Transverse colon (tissue), 4 donors: ENCODE measurements at regions of chr5 and their contacts with region 1.

Region 1: GRCh38 chr5:32092938-32093812 is 80.9 kb downstream of the GOLPH3 start:
- DNase-seq: peak; percentile 54
- H3K4me3 ChIP-seq: no peak overlapping the region
- H3K27ac ChIP-seq: no peak overlapping the region
- H3K4me1 ChIP-seq: peaks cover 0 to under 1% (median 0%) of the 10 kb centered on the region in 4 donors
- H3K27me3 ChIP-seq: no peaks in the 10 kb centered on the region
- CTCF ChIP-seq: peak; percentile 59 to 72 (median 65)
- EP300 ChIP-seq: no peak
- POLR2A ChIP-seq: no peak

Region 2: GRCh38 chr5:31573494-31574142 is 519.6 kb before region 1 on chr5:
- in situ Hi-C with region 1: loop called in 3 of 4 experiments (anchors 25 kb)
- intact Hi-C with region 1: loop called (anchors 10 kb)
- DNase-seq: no peak
- H3K4me3 ChIP-seq: no peak overlapping the region
- H3K27ac ChIP-seq: no peak overlapping the region
- H3K4me1 ChIP-seq: no peaks in the 10 kb centered on the region
- H3K27me3 ChIP-seq: no peaks in the 10 kb centered on the region
- CTCF ChIP-seq: no peak
- EP300 ChIP-seq: no peak
- POLR2A ChIP-seq: no peak

Region 3: DNA sequence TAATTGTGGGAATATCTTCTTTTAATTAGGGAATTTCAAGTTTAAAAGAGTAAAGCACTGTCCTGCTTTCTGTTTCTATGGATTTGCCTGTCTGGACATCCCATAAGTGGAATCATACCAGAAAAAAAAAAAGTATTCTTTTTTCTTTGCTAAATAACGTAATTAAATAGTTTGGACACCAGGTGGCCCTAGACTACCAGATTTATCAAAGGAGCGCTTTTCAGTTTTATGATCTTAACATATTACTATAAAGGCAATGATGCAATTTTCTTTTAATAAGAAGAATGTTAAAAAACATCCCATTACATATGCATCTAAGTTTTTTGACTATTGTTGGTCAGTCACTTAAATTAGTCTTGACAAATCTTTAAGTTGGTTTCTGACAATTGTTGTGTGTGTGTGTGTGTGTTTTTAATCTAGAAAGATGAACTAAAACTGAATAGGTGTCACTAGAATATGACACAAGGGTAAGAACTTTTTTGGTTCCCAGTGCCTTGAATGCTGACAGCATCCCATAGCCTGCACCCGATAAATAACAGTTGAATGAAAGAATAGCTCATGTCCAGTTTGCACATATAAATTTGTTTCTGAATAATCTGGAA is 511.6 kb before region 1 on chr5:
- in situ Hi-C with region 1: loop called in 3 of 4 experiments (anchors 25 kb)
- intact Hi-C with region 1: loop called (anchors 10 kb)
- DNase-seq: no peak
- H3K4me3 ChIP-seq: no peak overlapping the region
- H3K27ac ChIP-seq: no peak overlapping the region
- H3K4me1 ChIP-seq: no peaks in the 10 kb centered on the region
- H3K27me3 ChIP-seq: peaks cover 9% of the 10 kb centered on the region
- CTCF ChIP-seq: peak; percentile 34 to 52 (median 42)
- EP300 ChIP-seq: no peak
- POLR2A ChIP-seq: no peak

Region 4: GRCh38 chr5:31825518-31826068 is 267.6 kb before region 1 on chr5:
- in situ Hi-C with region 1: loop called in 1 of 4 experiments (anchors 10 kb)
- intact Hi-C with region 1: loop called (anchors 5 kb)
- DNase-seq: peak; percentile 21
- H3K4me3 ChIP-seq: no peak overlapping the region
- H3K27ac ChIP-seq: no peak overlapping the region
- H3K4me1 ChIP-seq: no peaks in the 10 kb centered on the region
- H3K27me3 ChIP-seq: no peaks in the 10 kb centered on the region
- CTCF ChIP-seq: peak; percentile 41 to 52 (median 46)
- EP300 ChIP-seq: no peak
- POLR2A ChIP-seq: no peak

Region 5: GRCh38 chr5:31833005-31833404 is 260.2 kb before region 1 on chr5:
- in situ Hi-C with region 1: loop called in 1 of 4 experiments (anchors 10 kb)
- intact Hi-C with region 1: loop called (anchors 5 kb)
- DNase-seq: no peak
- H3K4me3 ChIP-seq: no peak overlapping the region
- H3K27ac ChIP-seq: no peak overlapping the region
- H3K4me1 ChIP-seq: no peaks in the 10 kb centered on the region
- H3K27me3 ChIP-seq: no peaks in the 10 kb centered on the region
- CTCF ChIP-seq: no peak
- EP300 ChIP-seq: no peak
- POLR2A ChIP-seq: no peak

Region 6: DNA sequence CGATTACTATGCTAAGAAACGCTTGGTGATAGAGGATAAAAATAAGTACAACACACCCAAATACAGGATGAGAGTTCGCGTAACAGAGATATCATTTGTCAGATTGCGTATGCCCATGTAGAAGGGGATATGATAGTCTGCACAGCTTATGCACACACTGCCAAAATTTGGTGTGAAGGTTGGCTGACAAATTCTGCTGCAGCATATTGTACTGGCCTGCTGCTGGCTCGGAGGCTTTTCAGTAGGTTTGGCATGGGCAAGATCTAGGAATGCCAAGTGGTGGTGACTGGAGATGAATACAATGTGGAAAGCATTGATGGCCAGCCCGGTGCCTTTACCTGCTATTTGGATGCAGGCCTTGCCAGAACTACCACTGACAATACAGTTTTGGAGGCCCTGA is 245.8 kb before region 1 on chr5:
- in situ Hi-C with region 1: no loop called
- intact Hi-C with region 1: no loop called
- DNase-seq: no peak
- H3K4me3 ChIP-seq: no peak overlapping the region
- H3K27ac ChIP-seq: no peak overlapping the region
- H3K4me1 ChIP-seq: no peaks in the 10 kb centered on the region
- H3K27me3 ChIP-seq: no peaks in the 10 kb centered on the region
- CTCF ChIP-seq: no peak
- EP300 ChIP-seq: no peak
- POLR2A ChIP-seq: no peak

Region 7: GRCh38 chr5:31987985-31988710 is 105.0 kb before region 1 on chr5:
- in situ Hi-C with region 1: no loop called
- intact Hi-C with region 1: no loop called
- DNase-seq: no peak
- H3K4me3 ChIP-seq: no peak overlapping the region
- H3K27ac ChIP-seq: no peak overlapping the region
- H3K4me1 ChIP-seq: peaks cover 0 to 6% (median 0%) of the 10 kb centered on the region in 4 donors
- H3K27me3 ChIP-seq: no peaks in the 10 kb centered on the region
- CTCF ChIP-seq: no peak
- EP300 ChIP-seq: no peak
- POLR2A ChIP-seq: no peak

Region 8: GRCh38 chr5:32406650-32407049 is 313.5 kb after region 1 on chr5:
- in situ Hi-C with region 1: no loop called
- intact Hi-C with region 1: no loop called
- DNase-seq: no peak
- H3K4me3 ChIP-seq: no peak overlapping the region
- H3K27ac ChIP-seq: no peak overlapping the region
- H3K4me1 ChIP-seq: no peaks in the 10 kb centered on the region
- H3K27me3 ChIP-seq: no peaks in the 10 kb centered on the region
- CTCF ChIP-seq: no peak
- EP300 ChIP-seq: no peak
- POLR2A ChIP-seq: no peak